ENCODE measurements at regions of chr18 and their contacts with region 1.

Region 1: GRCh38 chr18:66819235-66819634 is 215.3 kb upstream of the CDH19 start:
- DNase-seq: no peak
- ATAC-seq: no peak
- H3K4me3 ChIP-seq: no peak overlapping the region
- H3K27ac ChIP-seq: no peak overlapping the region
- H3K4me1 ChIP-seq: no peaks in the 10 kb centered on the region
- H3K27me3 ChIP-seq: no peaks in the 10 kb centered on the region
- CTCF ChIP-seq: peak in 3 of 12 donors; percentile 5 to 21 (median 20)
- POLR2A ChIP-seq: no peak

Region 2: DNA sequence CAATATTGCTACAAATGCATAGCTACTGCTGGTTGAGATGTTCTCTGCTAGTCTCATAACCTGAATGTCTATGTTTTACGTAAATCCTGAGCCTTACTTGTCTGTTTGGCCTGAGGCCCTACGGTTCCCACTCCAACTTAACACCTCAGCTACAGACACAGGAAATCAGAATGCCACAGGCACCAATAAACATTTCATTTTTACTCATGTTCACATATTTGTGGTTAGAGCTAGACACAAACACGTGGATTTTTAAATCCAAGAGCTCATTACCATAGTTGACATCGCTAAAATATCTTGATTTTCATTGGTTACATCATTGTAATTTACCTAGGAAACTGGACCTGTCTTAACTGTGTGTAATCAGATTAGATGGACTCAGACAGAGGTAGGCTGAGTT is 48.4 kb after region 1 on chr18:
- intact Hi-C with region 1: loop called in 1 of 10 experiments (anchors 10 kb)
- DNase-seq: no peak
- ATAC-seq: no peak
- H3K4me3 ChIP-seq: no peak overlapping the region
- H3K27ac ChIP-seq: no peak overlapping the region
- H3K4me1 ChIP-seq: no peaks in the 10 kb centered on the region
- H3K27me3 ChIP-seq: no peaks in the 10 kb centered on the region
- CTCF ChIP-seq: no peak
- POLR2A ChIP-seq: no peak

Region 3: GRCh38 chr18:67318651-67319050 is 499.4 kb after region 1 on chr18:
- intact Hi-C with region 1: no loop called
- DNase-seq: no peak
- ATAC-seq: no peak
- H3K4me3 ChIP-seq: no peak overlapping the region
- H3K27ac ChIP-seq: no peak overlapping the region
- H3K4me1 ChIP-seq: no peaks in the 10 kb centered on the region
- H3K27me3 ChIP-seq: no peaks in the 10 kb centered on the region
- CTCF ChIP-seq: no peak
- POLR2A ChIP-seq: no peak